MCF 10A (cell line): ENCODE measurements at regions of chr1 and their contacts with region 1.

Region 1: DNA sequence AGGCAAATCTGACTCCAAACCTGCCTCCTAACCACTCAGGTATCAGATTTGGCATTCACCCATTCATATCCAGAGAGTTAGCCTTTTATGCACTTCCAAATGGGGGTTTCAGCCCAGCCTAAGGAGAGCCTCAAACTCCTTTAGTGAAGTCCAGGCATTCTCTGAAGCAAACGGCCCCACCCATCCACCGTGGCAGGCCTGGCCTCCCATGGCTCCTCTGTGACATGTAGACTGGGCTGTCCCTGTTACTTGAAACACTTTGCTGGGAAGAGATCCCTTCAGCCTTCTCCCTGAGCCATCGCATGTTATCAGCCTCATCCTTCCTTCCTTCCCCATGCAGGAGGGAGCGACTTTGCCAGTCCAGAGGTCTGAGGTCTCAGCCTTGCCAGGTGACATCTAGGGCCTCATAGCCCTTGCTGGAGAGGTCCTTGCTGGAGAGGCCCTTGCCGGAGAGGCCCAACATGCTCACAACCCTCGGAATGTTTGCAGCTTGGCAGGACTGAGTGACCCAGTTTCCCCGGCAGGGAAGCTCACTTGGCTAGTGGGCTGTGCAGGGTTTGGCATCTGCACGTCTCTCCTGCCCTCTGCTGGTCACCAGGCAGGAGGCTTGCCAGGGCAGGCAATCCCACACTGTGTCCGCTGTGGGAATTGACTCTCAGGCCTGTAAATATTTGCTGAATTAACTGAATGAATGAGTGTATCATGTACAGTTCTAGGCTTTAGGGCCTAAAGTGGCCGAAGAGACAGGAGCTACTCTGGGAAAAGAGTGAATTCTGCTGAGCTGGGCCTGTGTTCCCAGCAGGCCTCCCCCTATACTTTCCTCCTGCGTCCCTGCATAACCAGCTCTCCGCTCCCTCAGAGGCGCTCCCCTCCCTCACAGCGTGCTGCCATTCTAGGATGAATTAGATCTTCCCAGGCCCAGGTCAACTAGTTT is 26.7 kb upstream of the RBM15 start:
- DNase-seq: peak; percentile 67
- H3K4me3 Mint-ChIP-seq: no peak overlapping the region
- H3K27ac Mint-ChIP-seq: no peak overlapping the region
- H3K4me1 Mint-ChIP-seq: peaks cover 6% of the 10 kb centered on the region
- H3K27me3 Mint-ChIP-seq: no peaks in the 10 kb centered on the region
- CTCF ChIP-seq: peak; percentile 91

Region 2: GRCh38 chr1:110032331-110032730 is 280.1 kb before region 1 on chr1:
- CTCF ChIA-PET with region 1: no interaction called
- POLR2A ChIA-PET with region 1: no interaction called
- intact Hi-C with region 1: no loop called
- DNase-seq: no peak
- H3K4me3 Mint-ChIP-seq: no peak overlapping the region
- H3K27ac Mint-ChIP-seq: no peak overlapping the region
- H3K4me1 Mint-ChIP-seq: peaks cover 18% of the 10 kb centered on the region
- H3K27me3 Mint-ChIP-seq: no peaks in the 10 kb centered on the region
- CTCF ChIP-seq: no peak

Region 3: GRCh38 chr1:110119837-110120236 is 192.6 kb before region 1 on chr1:
- CTCF ChIA-PET with region 1: no interaction called
- POLR2A ChIA-PET with region 1: no interaction called
- intact Hi-C with region 1: no loop called
- DNase-seq: no peak
- H3K4me3 Mint-ChIP-seq: no peak overlapping the region
- H3K27ac Mint-ChIP-seq: no peak overlapping the region
- H3K4me1 Mint-ChIP-seq: no peaks in the 10 kb centered on the region
- H3K27me3 Mint-ChIP-seq: peaks cover 15% of the 10 kb centered on the region
- CTCF ChIP-seq: no peak

Region 4: GRCh38 chr1:110196917-110197765 is 115.3 kb before region 1 on chr1:
- CTCF ChIA-PET with region 1: interaction called, 1,128 read pairs
- POLR2A ChIA-PET with region 1: interaction called, 3 read pairs
- intact Hi-C with region 1: no loop called
- DNase-seq: peak; percentile 54
- H3K4me3 Mint-ChIP-seq: no peak overlapping the region
- H3K27ac Mint-ChIP-seq: no peak overlapping the region
- H3K4me1 Mint-ChIP-seq: no peaks in the 10 kb centered on the region
- H3K27me3 Mint-ChIP-seq: no peaks in the 10 kb centered on the region
- CTCF ChIP-seq: peak; percentile 89

Region 5: GRCh38 chr1:110229348-110230001 is 83.0 kb before region 1 on chr1:
- CTCF ChIA-PET with region 1: interaction called, 11 read pairs
- POLR2A ChIA-PET with region 1: interaction called, 3 read pairs
- intact Hi-C with region 1: no loop called
- DNase-seq: peak; percentile 83
- H3K4me3 Mint-ChIP-seq: peak overlapping the region; percentile 55
- H3K27ac Mint-ChIP-seq: peak overlapping the region; percentile 56
- H3K4me1 Mint-ChIP-seq: peaks cover 16% of the 10 kb centered on the region
- H3K27me3 Mint-ChIP-seq: no peaks in the 10 kb centered on the region
- CTCF ChIP-seq: no peak

Region 6: DNA sequence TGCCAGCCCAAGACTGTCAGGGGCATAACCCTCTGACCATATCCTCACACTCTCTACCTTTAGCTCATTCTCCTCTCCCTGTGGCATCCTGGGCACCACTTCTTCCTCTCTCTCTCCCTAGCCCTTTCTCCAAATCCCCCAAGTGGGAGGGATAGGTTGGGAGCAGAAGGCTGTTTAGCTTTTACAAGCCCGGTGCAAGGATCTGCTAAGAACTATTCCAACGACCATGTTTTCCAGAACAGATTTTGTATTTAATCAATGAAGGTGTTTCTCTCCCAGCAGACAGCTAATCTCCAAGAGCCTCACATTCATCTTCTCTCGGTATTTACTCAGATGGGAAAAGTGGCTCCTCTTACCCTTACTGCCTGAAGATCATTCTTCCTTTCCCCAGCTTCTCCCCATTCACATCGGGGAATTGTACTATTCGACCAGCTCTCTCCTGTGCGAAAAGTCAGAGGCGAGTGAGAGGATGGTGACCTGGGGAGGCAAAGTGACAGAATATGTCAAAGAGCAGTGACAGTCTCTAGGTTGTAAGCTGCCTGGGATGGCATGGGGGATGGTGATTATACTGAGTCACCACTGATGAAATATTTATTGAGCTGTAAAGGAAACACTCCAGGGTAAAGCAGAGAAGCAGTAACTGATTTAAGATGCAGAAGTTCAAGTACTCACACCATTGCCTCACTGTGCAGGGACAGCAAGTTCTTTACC is 20.3 kb before region 1 on chr1:
- CTCF ChIA-PET with region 1: interaction called, 27 read pairs
- POLR2A ChIA-PET with region 1: no interaction called
- intact Hi-C with region 1: no loop called
- DNase-seq: peak; percentile 36
- H3K4me3 Mint-ChIP-seq: no peak overlapping the region
- H3K27ac Mint-ChIP-seq: no peak overlapping the region
- H3K4me1 Mint-ChIP-seq: peaks cover 19% of the 10 kb centered on the region
- H3K27me3 Mint-ChIP-seq: no peaks in the 10 kb centered on the region
- CTCF ChIP-seq: no peak

Region 7: GRCh38 chr1:110338886-110339406 is 26.5 kb after region 1 on chr1 and contains the start of gene RBM15:
- CTCF ChIA-PET with region 1: interaction called, 38 read pairs
- POLR2A ChIA-PET with region 1: interaction called, 19 read pairs
- intact Hi-C with region 1: no loop called
- DNase-seq: peak; percentile 100
- H3K4me3 Mint-ChIP-seq: no peak within 1 kb of the TSS
- H3K27ac Mint-ChIP-seq: no peak within 1 kb of the TSS
- H3K4me1 Mint-ChIP-seq: peaks cover 39% of the 10 kb centered on the region
- H3K27me3 Mint-ChIP-seq: no peaks in the 10 kb centered on the region
- CTCF ChIP-seq: no peak
- total RNA-seq, gene RBM15: 31.4 and 35.9 TPM in 2 replicates

Region 8: DNA sequence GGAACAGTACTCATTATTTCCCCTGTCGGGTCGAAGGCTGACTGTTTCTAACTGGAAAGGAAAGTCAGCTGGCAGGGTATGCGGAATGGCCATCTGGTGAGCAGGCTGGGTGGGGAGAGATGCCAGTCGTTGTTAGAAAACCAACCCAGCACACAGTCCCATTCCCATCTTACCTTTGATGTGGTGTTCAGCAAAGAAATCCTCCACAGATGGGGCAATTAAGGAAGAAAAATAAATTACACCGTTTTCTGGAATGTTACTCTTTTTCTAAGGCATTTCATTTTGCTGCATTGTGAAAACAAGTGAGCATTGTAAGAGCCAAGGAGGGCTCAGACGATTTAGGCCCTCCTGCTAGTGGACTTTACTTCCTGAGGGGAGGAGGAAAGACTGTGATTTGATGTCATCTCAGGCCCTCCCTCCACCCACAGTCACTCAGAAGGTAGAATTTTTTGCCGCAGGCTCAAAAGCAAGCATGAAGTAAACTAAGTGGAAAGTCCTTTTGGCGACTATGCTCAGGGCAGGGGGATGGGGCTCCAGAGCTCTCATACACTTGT is 78.3 kb after region 1 on chr1 and contains the start of gene SLC16A4:
- CTCF ChIA-PET with region 1: no interaction called
- POLR2A ChIA-PET with region 1: no interaction called
- intact Hi-C with region 1: no loop called
- DNase-seq: peak; percentile 55
- H3K4me3 Mint-ChIP-seq: peak within 1 kb of the TSS; percentile 66
- H3K27ac Mint-ChIP-seq: peak within 1 kb of the TSS; percentile 57
- H3K4me1 Mint-ChIP-seq: peaks cover 35% of the 10 kb centered on the region
- H3K27me3 Mint-ChIP-seq: no peaks in the 10 kb centered on the region
- CTCF ChIP-seq: no peak
- total RNA-seq, gene SLC16A4: 9.8 and 11.0 TPM in 2 replicates

Region 9: GRCh38 chr1:110460253-110461220 is 148.1 kb after region 1 on chr1:
- CTCF ChIA-PET with region 1: interaction called, 11 read pairs
- POLR2A ChIA-PET with region 1: no interaction called
- intact Hi-C with region 1: loop called (anchors 1 kb)
- DNase-seq: peak; percentile 86
- H3K4me3 Mint-ChIP-seq: no peak overlapping the region
- H3K27ac Mint-ChIP-seq: no peak overlapping the region
- H3K4me1 Mint-ChIP-seq: peaks cover 11% of the 10 kb centered on the region
- H3K27me3 Mint-ChIP-seq: no peaks in the 10 kb centered on the region
- CTCF ChIP-seq: peak; percentile 97